ENCODE measurements at regions of chr6 and their contacts with region 1.

Region 1: DNA sequence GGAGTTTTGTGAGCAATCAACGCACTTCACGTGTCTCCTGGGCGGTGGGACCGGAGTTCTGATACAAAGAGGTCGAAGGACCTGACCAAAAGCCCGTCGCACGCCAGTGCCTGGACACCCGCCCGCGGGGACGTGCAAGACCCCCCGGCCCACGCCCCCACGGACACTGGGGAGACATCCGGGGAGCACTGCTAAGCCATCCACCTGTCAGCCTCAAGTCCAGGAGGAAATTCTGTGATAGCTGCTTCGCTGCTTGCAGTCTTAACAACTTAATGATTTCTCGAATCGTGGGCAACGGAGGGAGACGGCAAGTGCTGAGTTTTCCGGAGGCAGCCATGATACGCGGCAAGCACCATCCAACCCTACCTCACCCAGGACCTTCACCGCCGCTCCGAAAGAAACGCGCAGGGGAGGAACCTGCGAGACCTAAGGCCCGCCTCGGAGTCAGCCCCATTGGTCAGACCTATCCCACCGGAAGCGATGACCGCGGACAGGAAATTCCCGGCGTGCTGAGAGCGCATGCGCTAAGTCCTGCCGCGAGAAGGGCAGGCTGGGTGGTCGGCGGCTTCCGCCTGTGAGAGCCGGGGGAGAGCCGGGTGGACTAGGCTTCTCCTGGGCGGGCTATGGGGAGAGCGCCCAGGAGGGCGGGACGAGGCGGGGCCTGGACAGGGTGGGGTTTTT is at the start of gene TFB1M:
- DNase-seq: peak; percentile 99
- H3K4me3 ChIP-seq: peak within 1 kb of the TSS; percentile 60 to 100 (median 97)
- H3K27ac ChIP-seq: peak within 1 kb of the TSS; percentile 90
- H3K4me1 ChIP-seq: peaks cover 46% of the 10 kb centered on the region
- H3K27me3 ChIP-seq: no peaks in the 10 kb centered on the region
- CTCF ChIP-seq: no peak
- POLR2A ChIP-seq: peak; percentile 85
- total RNA-seq, gene TFB1M: 30.2 and 35.5 TPM in 2 replicates

Region 2: GRCh38 chr6:154868143-154868594 is 446.1 kb before region 1 on chr6:
- CTCF ChIA-PET with region 1: interaction called, 23 read pairs
- POLR2A ChIA-PET with region 1: no interaction called
- dilution Hi-C with region 1: no loop called
- intact Hi-C with region 1: loop called (anchors 2 kb)
- DNase-seq: peak; percentile 57
- H3K4me3 ChIP-seq: no peak overlapping the region
- H3K27ac ChIP-seq: no peak overlapping the region
- H3K4me1 ChIP-seq: no peaks in the 10 kb centered on the region
- H3K27me3 ChIP-seq: no peaks in the 10 kb centered on the region
- CTCF ChIP-seq: peak; percentile 53 to 54
- POLR2A ChIP-seq: no peak

Region 3: DNA sequence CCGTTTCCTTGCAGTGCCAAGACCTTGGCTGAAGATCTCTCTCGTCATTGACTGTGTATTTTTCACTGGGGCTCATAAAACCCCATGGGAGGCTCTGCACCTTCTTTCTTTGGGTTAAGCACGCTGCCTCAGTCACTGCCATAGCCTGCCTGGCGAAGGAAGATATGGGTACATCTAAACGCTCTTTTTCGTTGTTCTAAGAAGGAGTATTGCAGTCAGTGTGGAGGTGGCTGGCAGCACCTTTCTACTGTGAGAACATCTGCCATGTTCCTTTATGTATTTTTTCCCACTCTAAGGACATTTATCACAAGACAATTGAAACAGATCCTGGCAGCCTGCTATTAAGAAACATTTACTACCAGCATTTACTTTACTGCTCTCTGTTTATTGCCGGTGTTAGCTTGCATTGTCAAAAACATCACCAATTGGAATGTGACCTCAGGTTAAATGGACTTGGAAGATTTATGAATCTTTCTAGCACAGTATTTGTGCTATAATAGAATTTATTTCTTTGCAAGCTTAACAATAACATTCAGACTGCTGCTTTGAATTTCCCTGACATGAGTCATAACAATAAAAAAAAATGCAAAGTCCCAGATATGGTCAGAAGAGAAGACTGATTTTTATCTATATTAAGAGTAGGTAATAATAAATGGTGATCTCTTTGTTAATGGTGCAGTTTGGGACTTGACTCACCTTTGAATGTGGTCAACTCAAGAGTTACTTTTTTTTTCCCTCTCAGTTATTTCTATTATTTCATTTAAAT is 112.6 kb before region 1 on chr6:
- CTCF ChIA-PET with region 1: interaction called, 3 read pairs
- POLR2A ChIA-PET with region 1: no interaction called
- dilution Hi-C with region 1: no loop called
- intact Hi-C with region 1: loop called (anchors 1 kb)
- DNase-seq: peak; percentile 96
- H3K4me3 ChIP-seq: no peak overlapping the region
- H3K27ac ChIP-seq: peak overlapping the region; percentile 96
- H3K4me1 ChIP-seq: peaks cover 24% of the 10 kb centered on the region
- H3K27me3 ChIP-seq: no peaks in the 10 kb centered on the region
- CTCF ChIP-seq: no peak
- POLR2A ChIP-seq: no peak

Region 4: DNA sequence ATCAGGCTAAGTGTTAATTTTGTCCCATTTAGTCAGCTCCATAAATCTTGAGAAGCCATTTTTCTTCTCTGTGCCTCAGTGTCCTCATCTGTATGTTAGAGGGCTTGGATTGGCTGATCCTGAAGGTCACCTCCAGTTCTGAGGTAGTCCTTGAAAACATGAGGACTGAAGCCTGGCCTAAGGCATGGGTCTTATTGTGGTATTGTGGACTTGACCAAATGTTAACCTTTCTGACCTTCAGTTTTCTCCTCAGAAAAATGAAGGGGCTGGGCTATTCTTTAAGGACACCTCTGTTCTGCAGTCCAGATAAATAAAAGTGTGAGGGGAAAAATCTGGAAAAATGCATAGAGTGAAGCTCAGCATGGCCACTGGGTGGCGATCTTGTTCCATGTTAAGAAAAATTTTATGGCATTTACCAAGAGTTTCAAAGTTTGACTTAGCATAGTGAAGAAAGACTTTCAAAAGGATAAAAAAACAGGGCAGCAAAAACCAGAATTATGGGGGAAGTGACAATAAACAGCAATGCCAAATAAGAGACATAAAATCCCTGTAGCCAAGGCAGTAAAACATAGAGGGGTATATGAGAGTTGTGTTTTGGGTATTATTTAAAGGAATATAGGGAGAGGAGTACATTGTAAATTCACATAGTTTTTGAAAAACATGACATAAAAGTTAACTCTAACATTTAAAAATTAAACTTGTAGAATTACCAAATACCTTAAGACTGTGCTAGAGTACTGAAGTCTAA is 13.3 kb after region 1 on chr6:
- CTCF ChIA-PET with region 1: interaction called, 12 read pairs
- POLR2A ChIA-PET with region 1: no interaction called
- dilution Hi-C with region 1: no loop called
- intact Hi-C with region 1: no loop called
- DNase-seq: peak; percentile 84
- H3K4me3 ChIP-seq: no peak overlapping the region
- H3K27ac ChIP-seq: peak overlapping the region; percentile 7
- H3K4me1 ChIP-seq: peaks cover 9% of the 10 kb centered on the region
- H3K27me3 ChIP-seq: no peaks in the 10 kb centered on the region
- CTCF ChIP-seq: peak; percentile 50 to 58
- POLR2A ChIP-seq: no peak

Region 5: DNA sequence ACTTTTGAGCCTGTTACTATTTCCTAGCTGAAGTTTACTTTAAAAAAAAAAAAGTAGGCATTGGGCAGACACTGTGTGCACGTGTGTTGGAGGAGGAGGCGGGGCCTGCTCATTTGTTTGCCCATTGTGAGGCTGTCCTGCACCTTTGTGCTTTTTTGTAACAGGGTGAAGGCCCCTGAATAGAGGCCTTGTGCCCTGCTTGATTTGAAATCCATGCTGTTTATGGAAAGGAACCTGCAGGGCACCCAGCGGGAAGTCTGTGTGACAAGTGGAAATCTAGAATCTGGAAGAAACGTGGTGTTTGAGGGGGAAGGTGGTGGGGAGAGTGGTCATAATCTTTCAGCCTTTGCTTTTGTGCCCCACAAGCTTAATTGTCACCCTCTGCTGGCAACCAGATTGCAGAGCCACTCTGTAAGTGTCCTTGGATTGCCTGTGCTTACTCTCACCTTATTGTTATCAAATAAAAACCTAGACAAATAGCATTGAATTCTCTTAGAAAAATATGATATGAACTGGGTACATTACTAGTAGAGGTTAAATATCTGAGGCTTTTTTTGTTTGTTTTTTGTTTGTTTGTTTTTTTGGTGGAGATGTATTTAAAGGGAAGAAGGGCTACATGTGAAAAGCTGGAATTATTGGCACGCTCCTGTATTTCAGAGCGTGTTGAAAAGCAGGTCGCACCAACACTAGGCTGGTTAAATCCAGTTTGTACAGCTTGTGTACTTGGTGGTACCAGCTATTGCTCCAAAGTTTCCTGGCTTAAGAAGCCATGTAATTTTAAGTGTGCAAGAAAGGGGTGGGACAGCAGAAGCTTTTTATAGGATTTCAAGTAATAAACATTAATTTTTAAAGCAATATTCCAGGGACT is 1619.2 kb after region 1 on chr6:
- CTCF ChIA-PET with region 1: no interaction called
- POLR2A ChIA-PET with region 1: no interaction called
- dilution Hi-C with region 1: no loop called
- intact Hi-C with region 1: loop called (anchors 5 kb)
- DNase-seq: no peak
- H3K4me3 ChIP-seq: no peak overlapping the region
- H3K27ac ChIP-seq: no peak overlapping the region
- H3K4me1 ChIP-seq: no peaks in the 10 kb centered on the region
- H3K27me3 ChIP-seq: no peaks in the 10 kb centered on the region
- CTCF ChIP-seq: no peak
- POLR2A ChIP-seq: no peak

Measured in endothelial cell of umbilical vein (primary cell).